IMR-90 (cell line): ENCODE measurements at regions of chr3 and their contacts with region 1.

Region 1: DNA sequence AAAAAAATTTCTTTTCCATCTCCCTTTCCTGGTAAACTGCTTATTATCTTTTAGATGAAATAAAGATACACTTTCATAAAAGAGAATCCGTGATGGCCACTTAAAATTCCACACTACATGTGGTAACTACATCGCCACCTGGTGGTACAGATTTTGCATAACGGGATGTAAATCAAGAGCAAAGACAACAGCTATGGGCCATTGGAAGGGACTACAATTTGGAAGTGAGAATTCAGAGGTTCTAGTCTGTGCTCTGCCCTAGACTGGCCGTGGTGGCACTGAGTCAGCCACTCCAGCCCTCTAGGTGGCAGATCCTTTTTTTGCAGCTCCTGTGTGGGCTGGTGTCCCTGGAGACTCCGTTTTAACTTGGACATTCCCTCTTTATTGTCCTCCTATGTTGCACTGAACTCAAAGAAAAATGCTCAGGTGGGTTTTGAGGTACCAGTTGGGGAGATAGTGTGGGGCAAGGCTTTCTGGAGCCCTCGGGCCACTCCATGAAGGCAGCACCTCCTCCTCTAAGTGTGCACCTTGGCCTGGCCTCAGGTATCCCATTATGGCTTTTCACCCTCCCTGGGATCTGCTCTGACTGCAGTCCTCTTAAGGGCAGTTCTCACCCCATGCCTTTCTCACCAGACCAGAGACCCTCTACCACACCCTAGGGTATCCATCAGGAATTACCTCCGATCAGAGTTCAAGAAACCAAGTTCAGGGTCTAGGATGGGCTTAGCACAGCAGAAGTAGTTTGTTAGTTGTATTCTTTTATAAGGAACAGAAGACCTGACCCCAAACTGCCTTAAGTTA is 54.9 kb downstream of the SPSB4 start:
- DNase-seq: peak; percentile 86
- ATAC-seq: peak; percentile 90
- H3K4me3 ChIP-seq: no peak overlapping the region
- H3K27ac ChIP-seq: no peak overlapping the region
- H3K4me1 ChIP-seq: no peaks in the 10 kb centered on the region
- H3K27me3 ChIP-seq: peaks cover 32% of the 10 kb centered on the region
- CTCF ChIP-seq: peak; percentile 80
- POLR2A ChIP-seq: no peak
- RAD21 ChIP-seq: peak; percentile 72

Region 2: GRCh38 chr3:140822401-140823047 is 283.5 kb before region 1 on chr3:
- CTCF ChIA-PET with region 1: no interaction called
- POLR2A ChIA-PET with region 1: no interaction called
- dilution Hi-C with region 1: no loop called
- in situ Hi-C with region 1: no loop called
- intact Hi-C with region 1: no loop called
- DNase-seq: no peak
- ATAC-seq: no peak
- H3K4me3 ChIP-seq: no peak overlapping the region
- H3K27ac ChIP-seq: no peak overlapping the region
- H3K4me1 ChIP-seq: no peaks in the 10 kb centered on the region
- H3K27me3 ChIP-seq: no peaks in the 10 kb centered on the region
- CTCF ChIP-seq: no peak
- POLR2A ChIP-seq: no peak
- RAD21 ChIP-seq: no peak

Region 3: GRCh38 chr3:140922634-140923033 is 183.4 kb before region 1 on chr3:
- CTCF ChIA-PET with region 1: interaction called, 3 read pairs
- POLR2A ChIA-PET with region 1: no interaction called
- dilution Hi-C with region 1: no loop called
- in situ Hi-C with region 1: no loop called
- intact Hi-C with region 1: loop called (anchors 1 kb)
- DNase-seq: peak; percentile 49
- ATAC-seq: peak; percentile 91
- H3K4me3 ChIP-seq: no peak overlapping the region
- H3K27ac ChIP-seq: no peak overlapping the region
- H3K4me1 ChIP-seq: no peaks in the 10 kb centered on the region
- H3K27me3 ChIP-seq: peaks cover 6% of the 10 kb centered on the region
- CTCF ChIP-seq: peak; percentile 62
- POLR2A ChIP-seq: no peak
- RAD21 ChIP-seq: peak; percentile 61

Region 4: GRCh38 chr3:141000027-141000663 is 105.9 kb before region 1 on chr3:
- CTCF ChIA-PET with region 1: interaction called, 5 read pairs
- POLR2A ChIA-PET with region 1: no interaction called
- dilution Hi-C with region 1: no loop called
- in situ Hi-C with region 1: no loop called
- intact Hi-C with region 1: loop called (anchors 1 kb)
- DNase-seq: peak; percentile 42
- ATAC-seq: peak; percentile 100
- H3K4me3 ChIP-seq: no peak overlapping the region
- H3K27ac ChIP-seq: no peak overlapping the region
- H3K4me1 ChIP-seq: no peaks in the 10 kb centered on the region
- H3K27me3 ChIP-seq: peaks cover 5% of the 10 kb centered on the region
- CTCF ChIP-seq: peak; percentile 70
- POLR2A ChIP-seq: no peak
- RAD21 ChIP-seq: peak; percentile 75

Region 5: DNA sequence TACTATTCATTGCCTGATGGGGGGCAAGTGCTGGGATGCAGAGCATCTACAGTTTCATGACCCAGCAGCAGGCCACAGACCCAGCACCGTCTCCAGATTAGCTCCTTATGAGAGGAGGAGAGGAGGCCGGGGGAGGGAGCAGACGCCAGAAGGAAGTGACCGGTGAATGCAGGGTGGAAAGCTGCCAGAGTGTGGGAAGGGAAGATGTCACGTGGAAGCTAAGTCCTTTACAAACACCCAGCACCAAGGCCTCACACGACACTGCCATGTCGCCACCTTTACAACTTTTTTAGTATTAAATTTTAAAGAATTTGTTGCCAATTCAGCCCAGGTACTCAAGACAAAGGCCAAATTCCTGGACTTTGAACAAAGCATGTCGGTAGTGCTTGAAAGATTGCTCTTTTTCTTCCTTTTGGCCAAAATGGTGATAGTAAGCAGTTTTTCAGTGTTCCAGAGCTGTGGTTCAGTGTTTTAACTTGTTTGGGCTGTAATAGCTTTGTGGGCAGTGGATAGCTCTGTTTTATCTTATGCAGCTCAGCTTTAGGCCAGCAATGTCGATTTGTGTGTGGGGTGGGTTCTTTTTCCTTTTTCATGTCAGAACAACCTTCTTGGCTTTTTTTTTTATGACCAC is 320.5 kb after region 1 on chr3:
- CTCF ChIA-PET with region 1: no interaction called
- POLR2A ChIA-PET with region 1: no interaction called
- dilution Hi-C with region 1: no loop called
- in situ Hi-C with region 1: no loop called
- intact Hi-C with region 1: no loop called
- DNase-seq: peak; percentile 79
- ATAC-seq: peak; percentile 13; the same call in 1 of the 2 replicates
- H3K4me3 ChIP-seq: no peak overlapping the region
- H3K27ac ChIP-seq: peak overlapping the region; percentile 3; the same call in 1 of the 2 replicates
- H3K4me1 ChIP-seq: peaks cover 34% of the 10 kb centered on the region
- H3K27me3 ChIP-seq: no peaks in the 10 kb centered on the region
- CTCF ChIP-seq: no peak
- POLR2A ChIP-seq: no peak
- RAD21 ChIP-seq: no peak

Region 6: DNA sequence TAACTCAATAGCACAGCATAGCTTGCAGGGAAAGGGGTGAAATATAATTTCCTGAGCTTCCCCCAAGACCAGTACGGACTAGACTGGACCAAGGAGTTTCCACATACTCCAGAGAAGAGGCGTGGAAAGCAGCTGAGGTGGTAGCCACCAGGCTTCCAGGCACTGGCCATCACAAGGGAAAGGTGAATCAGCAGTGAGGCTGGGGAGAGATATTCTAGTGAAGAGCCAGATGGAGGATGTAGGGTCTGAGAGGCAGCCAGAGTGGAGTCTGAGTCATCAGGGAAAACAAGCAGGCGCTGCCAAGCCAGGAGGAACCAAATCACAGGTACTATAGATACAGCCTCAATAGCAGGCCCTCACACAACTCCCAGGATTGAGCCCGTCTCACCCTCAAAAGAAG is 371.2 kb after region 1 on chr3:
- CTCF ChIA-PET with region 1: no interaction called
- POLR2A ChIA-PET with region 1: no interaction called
- dilution Hi-C with region 1: no loop called
- in situ Hi-C with region 1: no loop called
- intact Hi-C with region 1: no loop called
- DNase-seq: peak; percentile 94
- ATAC-seq: peak; percentile 85
- H3K4me3 ChIP-seq: no peak overlapping the region
- H3K27ac ChIP-seq: no peak overlapping the region
- H3K4me1 ChIP-seq: no peaks in the 10 kb centered on the region
- H3K27me3 ChIP-seq: no peaks in the 10 kb centered on the region
- CTCF ChIP-seq: no peak
- POLR2A ChIP-seq: no peak
- RAD21 ChIP-seq: no peak